Activated B cell treated with CpG ODN at 0.5 μM for 24 hours (primary cell): ENCODE measurements at regions of chr6 and their contacts with region 1.

Region 1: DNA sequence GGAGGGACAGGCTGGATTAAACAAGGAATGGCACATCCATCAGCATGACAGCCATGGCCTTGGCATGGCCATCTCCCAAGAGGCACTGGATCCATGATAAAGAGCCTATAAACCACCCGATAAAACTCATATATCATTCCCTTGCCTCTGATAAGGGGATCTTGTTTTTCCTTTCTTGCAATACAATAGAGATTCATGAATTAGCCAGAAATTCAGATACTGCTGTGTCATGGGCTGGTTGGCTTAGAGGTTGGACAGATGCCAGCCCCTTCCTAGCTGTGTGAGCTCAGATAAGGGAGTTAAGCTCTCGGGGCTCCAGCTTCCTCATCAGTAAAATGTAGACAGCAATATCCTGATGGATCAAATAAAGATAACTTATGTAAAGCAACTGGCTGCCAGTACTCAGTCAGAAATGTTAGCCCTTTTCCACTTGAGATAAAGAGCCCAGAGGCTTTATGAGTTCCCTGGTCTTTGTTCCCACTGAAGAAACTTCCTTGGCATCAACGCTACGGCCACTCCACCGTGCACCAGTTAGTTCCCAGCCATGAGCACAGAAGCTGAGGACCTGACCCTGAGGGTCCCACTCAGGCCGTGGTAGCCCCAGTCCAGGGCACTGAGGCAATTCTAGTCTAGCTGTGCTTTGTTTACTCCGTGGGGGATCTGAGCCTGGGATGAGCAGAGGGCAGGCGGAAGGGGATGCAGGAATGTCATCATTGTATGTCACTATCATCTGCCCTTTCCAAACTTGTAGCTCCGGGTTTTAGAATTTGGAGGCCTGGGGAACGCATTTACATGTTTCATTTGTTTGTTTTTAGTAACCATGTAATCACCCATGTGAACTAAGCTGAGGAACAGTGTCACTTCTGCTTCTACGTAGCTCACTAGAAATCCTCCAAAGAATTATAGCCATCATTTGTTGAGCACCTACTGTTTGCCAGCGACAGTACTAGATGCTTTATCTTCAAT is 67.2 kb upstream of the TBC1D7 start:
- DNase-seq: no peak
- ATAC-seq: peak; percentile 62
- H3K4me3 Mint-ChIP-seq: peak overlapping the region; percentile 47
- H3K27ac Mint-ChIP-seq: peak overlapping the region; percentile 91
- H3K4me1 Mint-ChIP-seq: peaks cover 56% of the 10 kb centered on the region
- H3K27me3 Mint-ChIP-seq: no peaks in the 10 kb centered on the region
- CTCF ChIP-seq: no peak

Region 2: DNA sequence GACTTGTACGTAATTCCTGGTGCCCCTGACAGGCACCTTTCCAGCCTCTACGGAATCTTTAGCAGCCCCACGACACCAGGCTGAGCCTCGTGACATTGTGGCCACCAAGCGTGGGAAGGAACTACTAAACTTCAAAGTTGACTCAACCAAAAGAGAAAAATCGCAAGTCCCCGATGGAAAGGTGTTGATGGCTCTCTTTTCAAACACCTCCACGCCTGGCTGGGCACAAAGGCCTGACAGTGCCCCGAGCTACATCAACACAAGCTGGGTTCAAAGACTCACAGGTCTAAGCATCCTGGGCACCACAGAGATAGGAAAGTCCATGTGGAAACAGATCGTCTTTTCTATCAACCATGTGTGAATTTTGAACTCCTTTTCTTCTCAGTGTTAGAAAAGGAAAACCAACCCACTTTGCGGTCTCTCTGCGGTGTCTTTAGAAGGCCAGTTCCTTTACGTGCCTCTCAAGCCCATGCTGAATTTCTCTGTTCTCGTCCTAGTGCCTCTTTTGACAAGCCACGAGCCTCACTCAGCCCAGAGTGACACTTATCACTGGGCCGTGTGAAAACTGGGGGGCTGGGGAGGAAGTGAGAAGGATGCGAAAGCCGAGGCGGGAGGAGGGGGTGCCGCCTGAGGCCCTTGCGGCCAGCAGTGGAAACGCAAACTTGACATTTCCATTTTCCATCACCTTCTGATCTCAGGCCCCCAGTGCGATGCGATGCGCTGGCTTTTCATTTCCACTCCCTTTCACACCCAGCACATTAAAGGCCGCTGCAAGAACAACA is 32.4 kb after region 1 on chr6:
- CTCF ChIA-PET with region 1: interaction called, 4 read pairs
- POLR2A ChIA-PET with region 1: interaction called, 4 read pairs
- intact Hi-C with region 1: loop called (anchors 1 kb)
- DNase-seq: peak; percentile 58
- ATAC-seq: peak; percentile 86
- H3K4me3 Mint-ChIP-seq: peak overlapping the region; percentile 80
- H3K27ac Mint-ChIP-seq: peak overlapping the region; percentile 95
- H3K4me1 Mint-ChIP-seq: peaks cover 68% of the 10 kb centered on the region
- H3K27me3 Mint-ChIP-seq: no peaks in the 10 kb centered on the region
- CTCF ChIP-seq: no peak

Region 3: GRCh38 chr6:13635948-13636658 is 240.5 kb after region 1 on chr6:
- CTCF ChIA-PET with region 1: no interaction called
- POLR2A ChIA-PET with region 1: no interaction called
- intact Hi-C with region 1: no loop called
- DNase-seq: no peak
- ATAC-seq: no peak
- H3K4me3 Mint-ChIP-seq: no peak overlapping the region
- H3K27ac Mint-ChIP-seq: no peak overlapping the region
- H3K4me1 Mint-ChIP-seq: peaks cover 8% of the 10 kb centered on the region
- H3K27me3 Mint-ChIP-seq: no peaks in the 10 kb centered on the region
- CTCF ChIP-seq: no peak